Left lung (tissue), 14 donors: ENCODE measurements at regions of chr18 and their contacts with region 1.

Region 1: DNA sequence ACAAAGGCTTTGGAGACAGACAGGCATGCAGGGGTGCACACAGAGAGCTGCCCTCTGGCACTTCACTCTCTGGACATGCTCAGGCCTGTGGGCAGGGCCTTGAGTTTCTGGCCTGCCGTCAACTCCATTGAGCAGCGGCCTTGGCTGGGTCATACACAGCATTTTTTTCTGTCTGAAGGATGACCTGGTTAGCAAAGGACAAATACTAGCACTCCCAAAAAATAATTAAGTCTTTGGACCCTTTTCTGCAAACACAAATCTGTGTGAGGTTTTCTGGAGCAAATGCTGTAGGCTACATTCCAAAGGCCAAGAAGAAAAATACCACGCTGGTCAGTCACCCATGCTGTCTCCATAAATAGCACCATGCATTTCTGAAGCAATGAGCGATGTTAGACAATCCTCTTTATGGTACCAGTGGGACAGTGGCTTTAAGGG is 124.7 kb upstream of the CTAGE1 start:
- DNase-seq: peak in 1 of 4 donors; percentile 53
- ATAC-seq: peak; percentile 90
- H3K4me3 ChIP-seq: no peak overlapping the region
- H3K27ac ChIP-seq: no peak overlapping the region
- H3K4me1 ChIP-seq: no peaks in the 10 kb centered on the region
- H3K27me3 ChIP-seq: no peaks in the 10 kb centered on the region
- CTCF ChIP-seq: no peak

Region 2: GRCh38 chr18:22342625-22343024 is 199.8 kb before region 1 on chr18:
- intact Hi-C with region 1: no loop called
- DNase-seq: peak in 2 of 4 donors; percentile 58 to 71
- ATAC-seq: peak; percentile 68
- H3K4me3 ChIP-seq: no peak overlapping the region
- H3K27ac ChIP-seq: no peak overlapping the region
- H3K4me1 ChIP-seq: peaks cover 20 to 33% of the 10 kb centered on the region in 2 donors
- H3K27me3 ChIP-seq: peaks cover 0 to 18% of the 10 kb centered on the region in 2 donors
- CTCF ChIP-seq: no peak

Region 3: GRCh38 chr18:22378672-22379282 is 163.6 kb before region 1 on chr18:
- intact Hi-C with region 1: no loop called
- DNase-seq: peak in 1 of 4 donors; percentile 18
- ATAC-seq: peak; percentile 84
- H3K4me3 ChIP-seq: no peak overlapping the region
- H3K27ac ChIP-seq: no peak overlapping the region
- H3K4me1 ChIP-seq: no peaks in the 10 kb centered on the region
- H3K27me3 ChIP-seq: no peaks in the 10 kb centered on the region
- CTCF ChIP-seq: peak; percentile 34 to 58

Region 4: GRCh38 chr18:22494771-22495170 is 47.6 kb before region 1 on chr18:
- intact Hi-C with region 1: loop called in 1 of 2 experiments (anchors 10 kb)
- DNase-seq: no peak
- ATAC-seq: peak; percentile 44
- H3K4me3 ChIP-seq: no peak overlapping the region
- H3K27ac ChIP-seq: peak overlapping the region in 1 of 2 donors; percentile 33
- H3K4me1 ChIP-seq: no peaks in the 10 kb centered on the region
- H3K27me3 ChIP-seq: no peaks in the 10 kb centered on the region
- CTCF ChIP-seq: no peak

Region 5: DNA sequence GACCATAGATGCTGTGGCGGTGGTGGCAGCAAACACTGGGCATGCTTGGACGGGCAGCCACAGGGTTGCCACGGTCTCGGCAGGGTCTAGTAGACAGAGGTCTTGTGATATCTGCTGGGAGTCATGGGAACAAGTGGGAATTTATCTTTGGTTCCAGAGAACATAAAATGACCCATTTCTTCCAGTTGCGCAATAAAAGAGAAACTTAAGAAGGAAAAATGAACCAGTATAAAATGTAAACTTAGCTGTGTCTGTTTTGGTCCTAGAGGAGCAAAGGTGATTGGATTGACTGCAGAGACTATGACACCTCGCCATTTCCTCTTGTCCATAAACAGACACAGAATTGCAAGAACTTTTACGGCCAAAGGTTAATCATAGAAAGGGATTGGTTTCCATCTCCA is 258.1 kb after region 1 on chr18:
- intact Hi-C with region 1: no loop called
- DNase-seq: no peak
- ATAC-seq: peak; percentile 13
- H3K4me3 ChIP-seq: no peak overlapping the region
- H3K27ac ChIP-seq: peak overlapping the region in 1 of 2 donors; percentile 8
- H3K4me1 ChIP-seq: no peaks in the 10 kb centered on the region
- H3K27me3 ChIP-seq: no peaks in the 10 kb centered on the region
- CTCF ChIP-seq: no peak

Region 6: GRCh38 chr18:23095463-23095862 is 553.0 kb after region 1 on chr18:
- intact Hi-C with region 1: no loop called
- DNase-seq: no peak
- ATAC-seq: no peak
- H3K4me3 ChIP-seq: no peak overlapping the region
- H3K27ac ChIP-seq: no peak overlapping the region
- H3K4me1 ChIP-seq: no peaks in the 10 kb centered on the region
- H3K27me3 ChIP-seq: no peaks in the 10 kb centered on the region
- CTCF ChIP-seq: no peak